IMR-90 (cell line): ENCODE measurements at regions of chr2 and their contacts with region 1.

Region 1: GRCh38 chr2:197310271-197310985 is at the start of gene ANKRD44:
- DNase-seq: peak; percentile 80
- ATAC-seq: peak; percentile 94
- H3K4me3 ChIP-seq: peak within 1 kb of the TSS; percentile 98
- H3K27ac ChIP-seq: peak within 1 kb of the TSS; percentile 70
- H3K4me1 ChIP-seq: peaks cover 8% of the 10 kb centered on the region
- H3K27me3 ChIP-seq: no peaks in the 10 kb centered on the region; the same call in 1 of the 2 replicates
- CTCF ChIP-seq: peak; percentile 61
- POLR2A ChIP-seq: no peak
- RAD21 ChIP-seq: peak; percentile 73
- total RNA-seq, gene ANKRD44: 11.7 and 15.6 TPM in 2 replicates

Region 2: DNA sequence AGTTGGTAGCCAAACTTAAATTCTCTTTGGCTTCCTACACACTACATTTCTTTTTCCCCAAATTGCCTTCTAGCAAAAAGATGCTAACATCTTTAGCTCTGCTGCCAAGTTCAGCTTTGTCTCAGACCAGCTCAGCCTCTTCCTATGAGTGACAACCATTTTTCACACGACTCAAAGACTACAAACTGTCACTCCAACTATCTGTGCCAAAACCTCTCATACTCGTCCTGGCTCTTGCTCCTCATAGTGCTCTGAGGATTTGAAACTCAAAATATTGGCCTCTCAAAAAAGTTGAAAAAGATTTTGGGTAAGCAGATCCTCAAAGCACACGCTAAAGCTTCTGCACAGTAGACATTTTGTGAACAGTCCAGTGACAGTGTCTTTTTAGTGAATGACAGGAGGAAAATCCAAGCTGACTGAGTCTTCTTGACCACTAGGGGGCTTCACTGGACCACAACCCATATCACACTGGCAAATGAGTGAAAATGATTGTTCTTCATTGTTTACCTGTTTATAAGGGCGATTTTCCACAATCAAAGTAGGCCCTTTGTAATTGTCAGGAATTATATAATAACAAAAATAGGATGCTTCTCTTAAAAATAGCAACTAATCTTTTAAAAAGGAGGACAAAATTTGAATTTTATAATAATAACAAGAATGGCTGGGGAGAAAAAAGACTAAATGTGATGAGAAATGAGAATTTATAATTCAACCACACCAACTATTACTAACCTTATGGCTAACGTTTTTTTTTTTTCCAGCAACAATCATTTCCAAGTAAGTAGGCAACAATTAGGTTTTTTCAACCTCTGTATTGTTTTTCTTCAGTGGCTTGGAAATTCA is 298.4 kb before region 1 on chr2:
- CTCF ChIA-PET with region 1: no interaction called
- POLR2A ChIA-PET with region 1: no interaction called
- dilution Hi-C with region 1: no loop called
- in situ Hi-C with region 1: no loop called
- intact Hi-C with region 1: loop called (anchors 10 kb)
- DNase-seq: peak; percentile 53
- ATAC-seq: peak; percentile 74
- H3K4me3 ChIP-seq: no peak overlapping the region
- H3K27ac ChIP-seq: no peak overlapping the region
- H3K4me1 ChIP-seq: no peaks in the 10 kb centered on the region
- H3K27me3 ChIP-seq: no peaks in the 10 kb centered on the region
- CTCF ChIP-seq: peak; percentile 74
- POLR2A ChIP-seq: no peak
- RAD21 ChIP-seq: peak; percentile 76

Region 3: DNA sequence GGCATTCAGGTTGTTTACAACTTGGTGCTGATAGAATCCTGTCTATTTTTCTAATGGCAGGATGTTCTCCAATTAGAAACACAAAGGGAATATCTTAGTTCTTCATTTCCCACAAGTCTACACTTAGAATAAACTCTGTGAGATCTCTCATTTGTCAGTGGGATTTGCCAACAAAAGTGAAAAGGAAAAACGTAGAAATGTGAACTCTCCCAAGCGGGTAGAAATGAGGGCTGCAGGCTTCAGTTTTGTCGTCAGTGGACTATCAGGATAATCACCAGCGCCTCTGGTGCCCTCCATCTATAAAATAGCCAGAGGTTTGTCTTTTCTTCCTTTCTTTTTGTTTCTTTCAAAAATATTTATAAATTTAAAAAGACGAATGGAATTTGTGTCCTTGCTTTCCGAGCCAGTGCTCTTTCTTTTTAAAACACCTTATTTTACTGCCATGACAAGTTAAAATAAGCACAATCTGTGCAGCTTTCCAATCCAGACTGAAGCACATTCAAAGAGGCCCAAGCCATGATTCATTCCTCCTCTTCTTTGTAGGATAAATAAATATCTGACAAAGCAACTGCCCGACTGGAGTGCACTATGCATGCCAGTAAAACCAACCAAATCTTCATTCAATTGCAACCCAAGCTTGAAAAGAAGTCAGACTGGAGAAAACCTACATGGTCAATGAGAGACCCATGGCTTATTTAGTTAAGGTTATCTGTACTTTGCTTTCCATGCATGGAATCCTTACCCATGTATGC is 185.6 kb before region 1 on chr2:
- CTCF ChIA-PET with region 1: no interaction called
- POLR2A ChIA-PET with region 1: no interaction called
- dilution Hi-C with region 1: no loop called
- in situ Hi-C with region 1: no loop called
- intact Hi-C with region 1: loop called (anchors 5 kb)
- DNase-seq: peak; percentile 92
- ATAC-seq: peak; percentile 94
- H3K4me3 ChIP-seq: no peak overlapping the region
- H3K27ac ChIP-seq: peak overlapping the region; percentile 71
- H3K4me1 ChIP-seq: peaks cover 13% of the 10 kb centered on the region
- H3K27me3 ChIP-seq: no peaks in the 10 kb centered on the region
- CTCF ChIP-seq: no peak
- POLR2A ChIP-seq: no peak
- RAD21 ChIP-seq: 0 out of 2 replicates have a peak, but pooled peaks have one; percentile 11

Region 4: DNA sequence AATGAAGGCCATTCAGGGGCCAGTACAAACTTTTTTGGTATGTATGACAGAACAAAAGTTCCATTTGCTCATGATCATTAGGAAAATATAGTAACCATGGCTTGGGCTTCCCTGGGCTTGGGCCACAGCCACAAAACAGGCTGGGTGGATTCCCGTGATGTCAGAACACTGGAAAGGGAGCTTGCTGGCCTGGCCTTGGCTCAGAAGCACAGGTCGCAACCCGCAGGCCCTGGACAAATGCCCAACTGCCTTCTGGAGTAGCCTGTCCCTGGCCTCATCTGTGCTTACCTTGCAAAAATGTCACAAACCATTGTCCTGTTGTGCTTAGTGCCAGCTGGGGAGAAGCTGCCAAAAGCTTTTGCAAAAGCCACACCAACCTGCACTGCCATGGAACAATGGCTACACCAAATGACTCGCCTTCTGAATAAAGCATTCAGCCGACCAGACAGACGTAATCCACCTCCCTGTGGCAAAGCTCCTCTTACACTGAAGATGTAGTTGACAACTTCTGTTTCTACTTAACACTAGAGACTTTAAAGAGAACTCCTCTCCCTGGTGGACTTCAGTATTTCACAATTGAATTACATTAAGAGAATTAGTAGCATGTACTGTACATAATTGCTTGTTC is 125.4 kb before region 1 on chr2:
- CTCF ChIA-PET with region 1: interaction called, 4 read pairs
- POLR2A ChIA-PET with region 1: no interaction called
- dilution Hi-C with region 1: no loop called
- in situ Hi-C with region 1: loop called (anchors 5 kb)
- intact Hi-C with region 1: loop called (anchors 2 kb)
- DNase-seq: peak; percentile 29
- ATAC-seq: no peak
- H3K4me3 ChIP-seq: no peak overlapping the region
- H3K27ac ChIP-seq: no peak overlapping the region
- H3K4me1 ChIP-seq: peaks cover 2% of the 10 kb centered on the region
- H3K27me3 ChIP-seq: no peaks in the 10 kb centered on the region
- CTCF ChIP-seq: no peak
- POLR2A ChIP-seq: no peak
- RAD21 ChIP-seq: no peak

Region 5: DNA sequence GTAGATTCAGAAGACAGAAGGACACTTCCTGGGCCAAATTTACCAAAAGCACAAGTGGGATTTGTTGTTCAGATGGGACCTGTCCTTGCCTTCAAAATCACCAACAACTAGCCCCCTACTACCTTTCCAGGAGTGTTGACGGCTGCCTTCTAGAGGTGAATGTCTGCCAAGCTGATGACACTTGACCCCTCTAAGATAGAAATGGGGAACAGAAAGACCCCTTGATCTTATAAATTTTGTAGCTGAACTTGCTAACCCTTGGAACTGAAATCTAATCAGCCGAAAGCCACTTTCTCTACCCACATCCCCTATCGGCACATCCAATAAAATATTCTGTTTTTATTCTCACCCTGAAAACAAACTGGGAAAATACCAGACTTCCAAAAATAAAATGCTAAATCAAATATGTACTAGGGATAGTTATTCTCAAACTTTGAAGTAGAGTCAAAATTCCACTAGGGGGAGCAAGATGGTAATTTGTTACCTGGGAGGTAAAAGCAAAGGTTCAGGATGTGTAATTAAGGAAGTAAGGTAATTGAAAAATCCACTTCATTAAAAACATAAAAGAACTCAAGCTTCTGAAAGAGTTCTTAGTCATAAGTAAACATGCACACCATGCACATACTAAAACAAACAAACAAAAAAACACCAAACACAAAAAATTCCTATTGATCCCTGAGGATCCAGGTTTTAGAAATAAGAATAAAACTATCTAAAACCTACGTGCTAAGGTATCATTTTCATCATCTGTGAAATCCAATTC is 119.1 kb before region 1 on chr2:
- CTCF ChIA-PET with region 1: interaction called, 4 read pairs
- POLR2A ChIA-PET with region 1: no interaction called
- dilution Hi-C with region 1: no loop called
- in situ Hi-C with region 1: loop called (anchors 5 kb)
- intact Hi-C with region 1: loop called (anchors 2 kb)
- DNase-seq: peak; percentile 28
- ATAC-seq: 0 out of 2 replicates have a peak, but pooled peaks have one; percentile 48
- H3K4me3 ChIP-seq: no peak overlapping the region
- H3K27ac ChIP-seq: no peak overlapping the region
- H3K4me1 ChIP-seq: no peaks in the 10 kb centered on the region
- H3K27me3 ChIP-seq: no peaks in the 10 kb centered on the region
- CTCF ChIP-seq: peak; percentile 66
- POLR2A ChIP-seq: no peak
- RAD21 ChIP-seq: peak; percentile 69

Region 6: GRCh38 chr2:197268786-197269584 is 41.4 kb before region 1 on chr2:
- CTCF ChIA-PET with region 1: no interaction called
- POLR2A ChIA-PET with region 1: interaction called, 11 read pairs
- dilution Hi-C with region 1: no loop called
- in situ Hi-C with region 1: no loop called
- intact Hi-C with region 1: no loop called
- DNase-seq: peak; percentile 32
- ATAC-seq: peak; percentile 62
- H3K4me3 ChIP-seq: no peak overlapping the region
- H3K27ac ChIP-seq: no peak overlapping the region
- H3K4me1 ChIP-seq: peaks cover 6% of the 10 kb centered on the region
- H3K27me3 ChIP-seq: no peaks in the 10 kb centered on the region
- CTCF ChIP-seq: no peak
- POLR2A ChIP-seq: no peak
- RAD21 ChIP-seq: no peak

Region 7: GRCh38 chr2:197378494-197379307 is 68.3 kb after region 1 on chr2:
- CTCF ChIA-PET with region 1: no interaction called
- POLR2A ChIA-PET with region 1: no interaction called
- dilution Hi-C with region 1: no loop called
- in situ Hi-C with region 1: no loop called
- intact Hi-C with region 1: loop called (anchors 5 kb)
- DNase-seq: peak; percentile 44
- ATAC-seq: peak; percentile 77
- H3K4me3 ChIP-seq: no peak overlapping the region
- H3K27ac ChIP-seq: no peak overlapping the region
- H3K4me1 ChIP-seq: peaks cover 5% of the 10 kb centered on the region
- H3K27me3 ChIP-seq: no peaks in the 10 kb centered on the region; the same call in 1 of the 2 replicates
- CTCF ChIP-seq: peak; percentile 81
- POLR2A ChIP-seq: no peak
- RAD21 ChIP-seq: peak; percentile 94